Activated CD4-positive, alpha-beta T cell treated with anti-CD3 and anti-CD28 coated beads for 36 hours (primary cell): ENCODE measurements at regions of chr11 and their contacts with region 1.

Region 1: DNA sequence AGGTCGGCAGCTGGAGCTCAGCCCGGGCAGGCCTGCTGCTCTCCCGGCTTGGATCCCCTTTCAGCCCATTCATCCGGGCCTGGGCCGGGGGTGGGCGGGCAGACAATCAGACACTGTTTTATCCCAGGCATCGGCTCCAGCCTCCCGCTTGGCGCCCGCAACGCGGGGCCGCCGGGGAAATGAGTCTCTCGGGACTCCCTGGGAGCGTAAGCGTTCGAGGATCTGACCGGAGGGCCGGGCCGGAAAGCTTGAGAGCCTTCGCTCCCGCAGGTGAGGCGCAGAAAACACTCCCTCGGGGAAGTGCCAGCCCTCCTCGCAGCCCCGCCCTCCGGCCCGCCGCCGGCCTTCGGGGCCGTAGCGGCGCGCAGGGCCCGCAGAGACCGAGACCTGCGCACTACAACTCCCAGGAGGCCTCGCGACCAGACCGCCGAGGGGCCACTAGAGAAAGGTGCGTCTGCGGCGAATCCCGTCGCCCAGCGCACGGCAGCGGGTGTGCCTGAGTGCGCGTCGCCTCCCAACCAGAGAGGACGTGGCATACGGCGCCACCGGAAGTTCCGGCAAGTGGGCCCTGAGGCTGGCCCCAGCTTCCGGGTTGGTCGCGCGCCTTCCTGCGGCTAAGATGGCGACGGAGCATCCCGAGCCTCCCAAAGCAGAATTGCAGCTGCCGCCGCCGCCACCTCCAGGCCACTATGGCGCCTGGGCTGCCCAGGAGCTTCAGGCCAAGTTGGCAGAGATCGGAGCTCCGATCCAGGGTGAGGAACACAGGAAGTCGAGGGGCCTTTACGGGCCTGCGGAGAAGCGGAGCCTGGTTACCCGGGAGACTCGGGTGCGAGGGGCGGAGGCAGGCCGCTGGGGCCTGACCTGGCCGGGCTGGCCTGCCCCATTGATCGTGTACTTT is at the start of gene SF3B2:
- DNase-seq: peak; percentile 99
- ATAC-seq: peak; percentile 99
- H3K4me3 Mint-ChIP-seq: peak within 1 kb of the TSS; percentile 91
- H3K27ac Mint-ChIP-seq: peak within 1 kb of the TSS; percentile 95
- H3K4me1 Mint-ChIP-seq: peaks cover 36% of the 10 kb centered on the region
- H3K27me3 Mint-ChIP-seq: peaks cover 4% of the 10 kb centered on the region
- total RNA-seq, gene SF3B2: 265 to 270 TPM

Region 2: DNA sequence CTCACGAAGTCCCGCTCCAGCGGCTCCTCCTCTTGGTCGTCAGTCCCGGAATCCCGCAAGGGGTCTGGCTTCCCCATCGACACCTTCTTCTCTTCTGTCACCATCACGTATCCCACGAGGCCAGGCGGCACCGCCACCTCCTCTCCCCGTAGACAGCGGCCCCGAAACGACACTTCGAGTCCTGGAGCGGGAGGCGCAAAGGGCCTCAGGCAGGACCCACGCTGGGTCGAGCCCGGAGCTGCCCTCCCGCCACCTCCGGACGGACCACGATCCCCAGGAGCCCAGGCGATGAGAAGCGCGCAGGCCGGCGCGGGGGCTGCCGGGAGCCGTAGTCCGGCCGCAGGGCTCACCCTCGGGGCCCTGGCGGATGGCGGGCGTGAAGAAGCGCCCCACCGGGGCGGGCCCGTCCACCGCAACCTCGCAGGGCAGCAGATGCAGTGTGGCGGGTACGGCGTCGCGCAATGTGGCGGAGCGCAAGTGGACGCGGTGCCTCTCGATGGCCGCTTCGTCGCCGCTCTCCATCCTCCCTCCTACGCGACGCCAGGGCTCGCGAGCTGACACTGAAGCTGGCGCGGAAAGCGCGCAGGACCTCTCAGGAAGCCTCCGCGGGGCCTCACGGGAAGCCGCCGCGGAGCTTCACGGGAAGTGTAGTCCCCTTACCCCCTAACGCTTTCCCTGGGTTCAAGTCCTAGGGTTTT is 331.6 kb before region 1 on chr11 and contains the start of gene RNASEH2C:
- CTCF ChIA-PET with region 1: no interaction called
- POLR2A ChIA-PET with region 1: no interaction called
- intact Hi-C with region 1: loop called in 1 of 2 experiments (anchors 1 kb)
- DNase-seq: peak; percentile 92
- ATAC-seq: peak; percentile 94
- H3K4me3 Mint-ChIP-seq: peak within 1 kb of the TSS; percentile 84
- H3K27ac Mint-ChIP-seq: peak within 1 kb of the TSS; percentile 88
- H3K4me1 Mint-ChIP-seq: peaks cover 23% of the 10 kb centered on the region
- H3K27me3 Mint-ChIP-seq: no peaks in the 10 kb centered on the region
- total RNA-seq, gene RNASEH2C: 72.5 to 96.8 TPM

Region 3: DNA sequence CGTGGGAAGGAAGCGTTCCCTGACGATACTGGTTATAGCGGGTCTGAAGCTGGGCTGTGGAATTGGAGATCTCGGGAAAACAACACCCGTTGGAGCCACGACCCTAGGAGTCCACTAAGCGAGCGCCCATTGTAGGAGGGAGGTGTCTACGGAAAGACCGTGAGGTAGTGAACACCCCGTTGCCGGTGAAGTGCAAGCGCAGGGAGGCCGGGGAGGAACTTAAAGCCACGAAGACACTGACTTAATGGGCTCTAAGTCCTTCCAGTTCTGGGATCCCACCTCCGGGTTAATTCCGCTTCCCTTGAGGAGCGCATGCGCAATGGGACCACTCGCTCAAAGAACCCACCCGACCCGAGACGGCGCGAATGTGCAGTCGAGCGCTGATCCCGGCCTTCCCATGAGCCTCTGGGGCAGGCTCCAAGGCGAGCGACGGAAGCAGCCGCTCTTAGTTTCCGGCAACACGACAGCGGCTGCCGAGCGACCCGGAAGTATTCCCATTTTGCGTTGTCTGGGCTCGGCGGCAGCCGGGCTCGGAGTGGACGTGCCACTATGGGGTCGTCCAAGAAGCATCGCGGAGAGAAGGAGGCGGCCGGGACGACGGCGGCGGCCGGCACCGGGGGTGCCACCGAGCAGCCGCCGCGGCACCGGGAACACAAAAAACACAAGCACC is 90.6 kb before region 1 on chr11 and contains the start of gene SART1:
- CTCF ChIA-PET with region 1: no interaction called
- POLR2A ChIA-PET with region 1: no interaction called
- intact Hi-C with region 1: loop called in 1 of 2 experiments (anchors 1 kb)
- DNase-seq: peak; percentile 98
- ATAC-seq: peak; percentile 91
- H3K4me3 Mint-ChIP-seq: peak within 1 kb of the TSS; percentile 92
- H3K27ac Mint-ChIP-seq: peak within 1 kb of the TSS; percentile 97
- H3K4me1 Mint-ChIP-seq: peaks cover 37% of the 10 kb centered on the region
- H3K27me3 Mint-ChIP-seq: no peaks in the 10 kb centered on the region
- total RNA-seq, gene SART1: 54.7 to 84.5 TPM

Region 4: DNA sequence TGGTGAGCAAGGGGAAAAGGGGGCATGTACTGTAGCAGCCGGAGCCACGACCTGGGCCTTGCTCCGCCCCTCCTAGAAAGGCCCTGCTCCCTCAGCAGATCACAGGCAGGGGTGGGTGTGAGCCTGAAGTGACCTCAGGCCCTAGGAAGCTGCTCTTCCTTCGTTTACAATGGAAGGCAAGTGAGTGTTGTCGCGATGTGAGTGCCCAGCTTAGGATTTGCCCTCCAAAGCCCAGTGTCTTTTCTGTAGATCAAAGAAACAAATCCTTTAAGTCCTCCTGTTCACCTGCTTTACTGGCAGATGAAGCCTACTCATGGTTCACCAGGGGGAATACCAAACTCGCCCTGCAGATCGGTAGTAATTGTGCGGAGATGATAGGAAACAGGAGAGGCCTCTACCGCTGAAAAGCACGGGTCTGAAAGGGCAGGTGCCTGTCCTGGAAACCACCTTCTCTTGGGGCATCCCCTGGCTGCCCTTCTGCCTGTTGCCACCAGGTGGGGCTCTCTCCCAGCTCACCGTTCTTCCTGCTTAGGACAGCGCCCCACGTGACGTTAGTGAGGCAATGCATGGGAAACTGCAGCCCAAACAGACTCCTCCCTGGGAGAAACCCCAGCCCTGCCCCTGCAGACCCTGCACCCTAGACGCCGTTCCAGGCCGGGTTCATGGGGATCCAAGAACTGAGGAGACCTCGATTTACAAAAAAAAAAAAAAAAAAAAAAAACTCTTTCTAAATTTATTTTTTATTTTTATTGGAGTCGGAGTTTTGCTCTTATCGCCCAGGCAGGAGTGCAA is 170.5 kb after region 1 on chr11:
- CTCF ChIA-PET with region 1: no interaction called
- POLR2A ChIA-PET with region 1: no interaction called
- intact Hi-C with region 1: loop called in 1 of 2 experiments (anchors 1 kb)
- DNase-seq: peak; percentile 97
- ATAC-seq: peak; percentile 94
- H3K4me3 Mint-ChIP-seq: peak overlapping the region; percentile 27
- H3K27ac Mint-ChIP-seq: peak overlapping the region; percentile 90
- H3K4me1 Mint-ChIP-seq: peaks cover 18% of the 10 kb centered on the region
- H3K27me3 Mint-ChIP-seq: no peaks in the 10 kb centered on the region

Region 5: GRCh38 chr11:66344550-66345315 is 292.7 kb after region 1 on chr11 and contains the start of gene BRMS1:
- CTCF ChIA-PET with region 1: no interaction called
- POLR2A ChIA-PET with region 1: no interaction called
- intact Hi-C with region 1: loop called in 1 of 2 experiments (anchors 1 kb)
- DNase-seq: peak; percentile 98
- ATAC-seq: peak; percentile 80
- H3K4me3 Mint-ChIP-seq: peak within 1 kb of the TSS; percentile 93
- H3K27ac Mint-ChIP-seq: peak within 1 kb of the TSS; percentile 90
- H3K4me1 Mint-ChIP-seq: peaks cover 45% of the 10 kb centered on the region
- H3K27me3 Mint-ChIP-seq: peaks cover 3% of the 10 kb centered on the region
- total RNA-seq, gene BRMS1: 29.2 to 30.2 TPM

Region 6: GRCh38 chr11:66426314-66426713 is 374.3 kb after region 1 on chr11:
- CTCF ChIA-PET with region 1: no interaction called
- POLR2A ChIA-PET with region 1: no interaction called
- intact Hi-C with region 1: no loop called
- DNase-seq: no peak
- ATAC-seq: no peak
- H3K4me3 Mint-ChIP-seq: no peak overlapping the region
- H3K27ac Mint-ChIP-seq: no peak overlapping the region
- H3K4me1 Mint-ChIP-seq: no peaks in the 10 kb centered on the region
- H3K27me3 Mint-ChIP-seq: no peaks in the 10 kb centered on the region